Activated CD8-positive, alpha-beta memory T cell treated with anti-CD3 and anti-CD28 coated beads, Interleukin-2, amount 10 ng/mL, durations not matched to agents 7 days and 5 days (primary cell): ENCODE measurements at regions of chr3 and their contacts with region 1.

Region 1: DNA sequence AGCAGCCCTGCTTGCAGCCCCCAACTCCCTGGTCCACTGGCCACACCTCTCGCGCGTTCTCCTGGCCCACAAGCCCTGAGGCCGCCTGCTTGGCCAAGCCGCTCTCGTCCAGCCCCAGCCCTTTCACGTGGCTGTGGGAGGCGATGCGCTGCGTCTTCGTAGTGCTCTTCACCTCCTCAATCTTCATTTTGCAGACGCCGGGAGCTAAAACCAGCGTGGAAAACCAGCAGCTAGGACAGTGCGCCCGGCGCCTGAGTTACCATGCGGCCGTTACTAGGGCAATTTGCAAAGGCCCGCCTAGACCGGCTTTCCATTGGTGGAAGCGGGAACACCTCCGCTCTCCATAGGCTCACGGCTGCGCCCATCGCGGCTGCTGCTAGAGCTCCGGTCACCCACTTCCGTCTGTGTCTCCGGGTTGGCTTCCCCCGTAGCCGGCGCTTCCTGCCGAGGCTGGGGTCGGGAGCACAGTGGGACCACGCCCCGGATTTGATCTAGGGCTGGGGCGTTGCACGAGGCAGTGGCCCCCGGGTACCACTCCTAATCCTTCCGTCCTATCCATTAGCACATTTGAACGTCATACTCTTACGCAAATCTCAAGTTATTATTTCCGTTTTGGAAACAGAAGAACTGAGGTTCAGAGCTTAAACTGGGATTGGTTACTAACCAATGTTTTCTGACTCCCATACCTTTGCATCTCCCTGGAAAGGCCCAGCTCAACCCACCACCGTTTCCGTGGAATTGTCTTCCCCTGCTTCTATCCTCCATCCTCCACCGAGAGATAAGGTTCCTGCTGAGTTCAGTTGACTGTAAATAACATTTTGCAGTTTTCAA is at the start of gene RUVBL1:
- DNase-seq: peak; percentile 99
- ATAC-seq: peak; percentile 99
- H3K4me3 Mint-ChIP-seq: peak within 1 kb of the TSS; percentile 98
- H3K27ac Mint-ChIP-seq: peak within 1 kb of the TSS; percentile 94
- H3K4me1 Mint-ChIP-seq: peaks cover 23% of the 10 kb centered on the region
- H3K27me3 Mint-ChIP-seq: peaks cover under 1% of the 10 kb centered on the region
- total RNA-seq, gene RUVBL1: 63.8 to 73.5 TPM

Region 2: DNA sequence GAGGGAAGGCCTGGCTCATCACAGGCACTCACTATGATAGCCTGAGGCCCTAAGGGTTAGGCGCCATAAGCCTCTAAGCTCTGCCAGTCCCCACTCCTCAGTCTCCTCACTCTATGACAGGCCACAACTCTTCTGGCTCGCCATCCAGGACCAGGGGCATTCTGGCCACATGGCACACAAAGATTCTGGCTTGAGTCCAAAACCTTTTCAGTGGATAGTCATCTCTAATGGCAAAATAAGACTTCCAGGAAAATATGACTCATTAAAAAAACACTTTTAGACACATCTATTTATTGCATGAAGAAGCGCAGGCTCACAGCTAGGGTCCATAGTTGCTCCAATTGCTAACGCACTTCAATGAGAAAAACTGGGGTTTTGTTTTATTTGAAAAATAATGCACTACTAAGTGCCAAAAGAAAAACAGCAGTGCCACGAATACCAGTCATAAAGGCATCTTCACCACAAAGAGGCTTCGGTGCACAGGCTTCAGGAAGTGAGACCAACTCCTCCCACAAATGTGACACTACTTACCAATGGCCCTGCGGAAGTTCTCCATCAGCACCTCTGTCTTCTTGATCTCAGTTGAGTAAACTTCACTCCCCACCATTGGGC is 11.3 kb before region 1 on chr3:
- CTCF ChIA-PET with region 1: interaction called, 16 read pairs
- DNase-seq: peak; percentile 82
- ATAC-seq: peak; percentile 88
- H3K4me3 Mint-ChIP-seq: peak overlapping the region; percentile 41
- H3K27ac Mint-ChIP-seq: peak overlapping the region; percentile 97
- H3K4me1 Mint-ChIP-seq: peaks cover 40% of the 10 kb centered on the region
- H3K27me3 Mint-ChIP-seq: no peaks in the 10 kb centered on the region

Region 3: GRCh38 chr3:128153156-128154041 is 29.6 kb after region 1 on chr3 and contains the start of gene EEFSEC:
- CTCF ChIA-PET with region 1: interaction called, 17 read pairs
- DNase-seq: peak; percentile 88
- ATAC-seq: peak; percentile 97
- H3K4me3 Mint-ChIP-seq: peak within 1 kb of the TSS; percentile 84
- H3K27ac Mint-ChIP-seq: peak within 1 kb of the TSS; percentile 92
- H3K4me1 Mint-ChIP-seq: peaks cover 25% of the 10 kb centered on the region
- H3K27me3 Mint-ChIP-seq: no peaks in the 10 kb centered on the region
- total RNA-seq, gene EEFSEC: 19.4 to 19.7 TPM